B cell (primary cell): ENCODE measurements at regions of chr9 and their contacts with region 1.

Region 1: GRCh38 chr9:71806901-71807307 is 38.6 kb upstream of the CEMIP2 start:
- DNase-seq: peak; percentile 74
- ATAC-seq: peak; percentile 88
- H3K4me3 ChIP-seq: no peak overlapping the region
- H3K4me3 Mint-ChIP-seq: no peak overlapping the region
- H3K27ac ChIP-seq: no peak overlapping the region
- H3K27ac Mint-ChIP-seq: peak overlapping the region; percentile 2
- H3K4me1 ChIP-seq: peaks cover 14 to 16% of the 10 kb centered on the region in 2 donors
- H3K4me1 Mint-ChIP-seq: peaks cover 24% of the 10 kb centered on the region
- H3K27me3 ChIP-seq: no peaks in the 10 kb centered on the region
- H3K27me3 Mint-ChIP-seq: no peaks in the 10 kb centered on the region
- CTCF ChIP-seq: peak; percentile 89

Region 2: GRCh38 chr9:71774920-71775319 is 32.0 kb before region 1 on chr9:
- CTCF ChIA-PET with region 1: interaction called, 37 read pairs
- POLR2A ChIA-PET with region 1: interaction called, 3 read pairs
- intact Hi-C with region 1: no loop called
- DNase-seq: no peak
- ATAC-seq: peak; percentile 65
- H3K4me3 ChIP-seq: no peak overlapping the region
- H3K4me3 Mint-ChIP-seq: peak overlapping the region; percentile 33
- H3K27ac ChIP-seq: peak overlapping the region; percentile 36 to 52
- H3K27ac Mint-ChIP-seq: peak overlapping the region; percentile 77
- H3K4me1 ChIP-seq: peaks cover 25 to 33% of the 10 kb centered on the region in 2 donors
- H3K4me1 Mint-ChIP-seq: peaks cover 23% of the 10 kb centered on the region
- H3K27me3 ChIP-seq: no peaks in the 10 kb centered on the region
- H3K27me3 Mint-ChIP-seq: no peaks in the 10 kb centered on the region
- CTCF ChIP-seq: no peak

Region 3: GRCh38 chr9:71783120-71783530 is 23.8 kb before region 1 on chr9:
- CTCF ChIA-PET with region 1: interaction called, 35 read pairs
- POLR2A ChIA-PET with region 1: no interaction called
- intact Hi-C with region 1: loop called (anchors 1 kb)
- DNase-seq: peak; percentile 90
- ATAC-seq: peak; percentile 93
- H3K4me3 ChIP-seq: peak overlapping the region in 3 of 5 experiments; percentile 6 to 22 (median 19)
- H3K4me3 Mint-ChIP-seq: peak overlapping the region; percentile 74
- H3K27ac ChIP-seq: peak overlapping the region; percentile 77 to 85
- H3K27ac Mint-ChIP-seq: peak overlapping the region; percentile 93
- H3K4me1 ChIP-seq: peaks cover 30 to 32% of the 10 kb centered on the region in 2 donors
- H3K4me1 Mint-ChIP-seq: peaks cover 44% of the 10 kb centered on the region
- H3K27me3 ChIP-seq: no peaks in the 10 kb centered on the region
- H3K27me3 Mint-ChIP-seq: no peaks in the 10 kb centered on the region
- CTCF ChIP-seq: peak; percentile 48

Region 4: DNA sequence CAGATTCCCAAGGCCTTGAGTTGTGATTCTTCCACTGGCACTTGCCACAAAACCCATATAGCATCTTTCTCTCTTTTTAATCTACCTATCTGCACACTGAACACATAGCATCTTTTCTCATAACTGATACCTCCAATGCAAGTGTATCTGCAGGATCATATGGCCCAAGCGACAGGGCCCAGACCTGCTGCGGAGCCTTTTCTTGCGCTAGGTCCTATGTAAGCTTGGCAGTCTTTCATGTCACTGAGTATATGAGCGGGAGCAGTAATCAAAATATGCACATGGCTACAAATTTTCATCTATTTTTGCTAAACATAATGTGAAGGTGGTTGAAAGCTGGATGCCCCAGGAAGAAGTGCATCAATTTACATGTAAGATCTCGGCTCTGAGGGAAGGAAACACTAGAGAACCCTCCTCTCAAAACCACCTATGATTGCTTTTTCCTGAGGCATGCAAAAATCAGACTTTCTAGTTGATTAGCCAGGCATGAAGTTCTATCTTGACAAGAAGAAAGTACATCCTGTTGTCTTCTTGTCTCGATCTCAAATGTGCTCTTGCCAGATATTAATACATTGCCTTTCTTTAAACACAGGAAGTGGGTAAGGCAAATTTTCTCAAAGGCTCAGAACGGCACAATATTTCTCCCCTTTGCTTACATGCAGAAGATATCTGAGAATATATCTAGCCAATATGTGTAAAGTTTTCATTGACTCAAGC is 11.6 kb before region 1 on chr9:
- CTCF ChIA-PET with region 1: interaction called, 76 read pairs
- POLR2A ChIA-PET with region 1: interaction called, 3 read pairs
- intact Hi-C with region 1: loop called (anchors 1 kb)
- DNase-seq: peak; percentile 87
- ATAC-seq: peak; percentile 87
- H3K4me3 ChIP-seq: peak overlapping the region in 1 of 5 experiments; percentile 40
- H3K4me3 Mint-ChIP-seq: peak overlapping the region; percentile 92
- H3K27ac ChIP-seq: peak overlapping the region; percentile 84 to 92
- H3K27ac Mint-ChIP-seq: peak overlapping the region; percentile 93
- H3K4me1 ChIP-seq: peaks cover 77 to 80% of the 10 kb centered on the region in 2 donors
- H3K4me1 Mint-ChIP-seq: peaks cover 70% of the 10 kb centered on the region
- H3K27me3 ChIP-seq: no peaks in the 10 kb centered on the region
- H3K27me3 Mint-ChIP-seq: no peaks in the 10 kb centered on the region
- CTCF ChIP-seq: no peak

Region 5: DNA sequence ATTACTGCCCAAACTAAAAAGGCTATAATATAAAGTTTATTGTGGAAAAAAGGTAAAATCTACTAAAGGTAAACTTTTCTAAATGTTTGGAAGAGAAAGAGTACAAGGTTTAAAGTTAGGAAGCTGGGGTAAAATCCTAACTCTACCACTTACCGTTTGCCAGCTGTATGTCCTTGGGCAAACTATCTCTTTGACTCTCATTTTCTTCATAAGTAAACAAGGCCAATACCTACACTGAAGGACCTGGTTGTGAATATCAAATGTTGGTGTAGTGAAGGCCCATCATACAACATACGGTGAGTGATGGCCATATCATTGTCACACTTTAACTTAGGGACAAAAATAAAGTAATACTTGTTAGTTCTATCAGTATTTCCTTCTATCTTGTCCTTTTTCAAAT is 69.2 kb after region 1 on chr9:
- CTCF ChIA-PET with region 1: no interaction called
- POLR2A ChIA-PET with region 1: no interaction called
- intact Hi-C with region 1: no loop called
- DNase-seq: no peak
- ATAC-seq: no peak
- H3K4me3 ChIP-seq: no peak overlapping the region
- H3K4me3 Mint-ChIP-seq: no peak overlapping the region
- H3K27ac ChIP-seq: no peak overlapping the region
- H3K27ac Mint-ChIP-seq: no peak overlapping the region
- H3K4me1 ChIP-seq: no peaks in the 10 kb centered on the region
- H3K4me1 Mint-ChIP-seq: peaks cover 16% of the 10 kb centered on the region
- H3K27me3 ChIP-seq: no peaks in the 10 kb centered on the region
- H3K27me3 Mint-ChIP-seq: no peaks in the 10 kb centered on the region
- CTCF ChIP-seq: no peak

Region 6: GRCh38 chr9:73081979-73082657 is 1275.2 kb after region 1 on chr9:
- CTCF ChIA-PET with region 1: no interaction called
- POLR2A ChIA-PET with region 1: no interaction called
- intact Hi-C with region 1: no loop called
- DNase-seq: peak; percentile 35
- ATAC-seq: no peak
- H3K4me3 ChIP-seq: no peak overlapping the region
- H3K4me3 Mint-ChIP-seq: no peak overlapping the region
- H3K27ac ChIP-seq: no peak overlapping the region
- H3K27ac Mint-ChIP-seq: no peak overlapping the region
- H3K4me1 ChIP-seq: no peaks in the 10 kb centered on the region
- H3K4me1 Mint-ChIP-seq: peaks cover 2% of the 10 kb centered on the region
- H3K27me3 ChIP-seq: no peaks in the 10 kb centered on the region
- H3K27me3 Mint-ChIP-seq: no peaks in the 10 kb centered on the region
- CTCF ChIP-seq: peak; percentile 78